SK-N-SH (cell line): ENCODE measurements at regions of chr5 and their contacts with region 1.

Region 1: GRCh38 chr5:93620487-93621326 is 37.7 kb downstream of the NR2F1 start:
- DNase-seq: peak; percentile 94
- H3K4me3 ChIP-seq: peak overlapping the region; percentile 71 to 85
- H3K27ac ChIP-seq: peak overlapping the region; percentile 86 to 97
- H3K4me1 ChIP-seq: peaks cover 0 to 4% of the 10 kb centered on the region in 2 experiments; a peak in 2 of 4 replicates
- H3K27me3 ChIP-seq: no peaks in the 10 kb centered on the region
- CTCF ChIP-seq: peak; percentile 22
- EP300 ChIP-seq: 0 out of 4 replicates have a peak, but pooled peaks of 1 of the 2 experiments have one; percentile 21
- RAD21 ChIP-seq: peak; percentile 60

Region 2: DNA sequence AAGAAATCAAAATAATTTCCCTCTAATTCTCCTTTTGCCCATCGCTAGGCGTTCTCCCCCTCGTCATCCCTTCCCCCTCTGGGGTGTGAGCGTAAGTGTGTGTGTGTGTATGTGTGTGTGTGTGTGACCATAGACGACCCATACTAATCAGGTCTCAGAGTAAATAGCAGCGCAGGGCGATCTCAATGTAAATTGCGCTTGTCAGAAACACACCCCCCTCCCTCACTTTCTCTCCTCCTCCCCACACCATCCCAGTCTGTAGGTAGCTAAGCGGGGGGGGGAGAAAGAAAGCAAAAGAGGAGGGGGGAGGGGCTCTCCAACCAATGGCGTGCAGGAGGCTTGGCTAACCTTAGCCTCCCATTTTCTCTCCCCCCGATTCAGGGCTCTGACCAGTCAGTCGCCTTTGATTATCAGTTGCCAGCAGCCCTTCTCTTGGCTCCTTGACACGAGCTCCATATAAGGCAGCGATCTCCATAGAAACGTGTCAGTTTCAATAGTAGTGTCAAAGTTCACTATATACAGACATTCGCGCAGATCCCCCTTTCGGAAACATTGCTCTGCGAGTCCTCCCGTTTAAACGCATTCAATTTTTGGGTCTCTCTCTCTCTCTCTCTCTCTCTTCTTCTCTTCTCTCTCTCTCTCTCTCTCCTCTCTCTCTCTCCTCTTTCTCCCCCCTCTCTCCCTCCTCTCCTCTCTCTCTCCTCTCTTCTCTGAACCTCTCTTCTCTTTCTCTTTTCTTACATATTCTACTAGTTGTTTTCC is 37.8 kb before region 1 on chr5 and contains the start of gene NR2F1:
- CTCF ChIA-PET with region 1: interaction called, 7 read pairs
- POLR2A ChIA-PET with region 1: interaction called, 18 read pairs
- DNase-seq: peak; percentile 80
- H3K4me3 ChIP-seq: peak within 1 kb of the TSS; percentile 74 to 87
- H3K27ac ChIP-seq: peak within 1 kb of the TSS; percentile 92
- H3K4me1 ChIP-seq: peaks cover 5 to 6% of the 10 kb centered on the region in 2 experiments; a peak in 3 of 4 replicates
- H3K27me3 ChIP-seq: no peaks in the 10 kb centered on the region
- CTCF ChIP-seq: peak; percentile 27; the same call in 1 of the 2 replicates
- EP300 ChIP-seq: peak; percentile 49 to 66; a peak in 3 of 4 replicates
- RAD21 ChIP-seq: no peak; the same call in 1 of the 2 replicates
- polyA plus RNA-seq, gene NR2F1: 40.0 and 47.1 TPM in 2 replicates

Region 3: GRCh38 chr5:93599399-93600120 is 21.1 kb before region 1 on chr5:
- CTCF ChIA-PET with region 1: interaction called, 3 read pairs
- POLR2A ChIA-PET with region 1: interaction called, 12 read pairs
- DNase-seq: peak; percentile 44
- H3K4me3 ChIP-seq: no peak overlapping the region; a peak in 1 of 4 replicates
- H3K27ac ChIP-seq: peak overlapping the region; percentile 61 to 94
- H3K4me1 ChIP-seq: peaks cover 6 to 20% of the 10 kb centered on the region in 2 experiments; a peak in 2 of 4 replicates
- H3K27me3 ChIP-seq: no peaks in the 10 kb centered on the region
- CTCF ChIP-seq: no peak
- EP300 ChIP-seq: no peak
- RAD21 ChIP-seq: no peak

Region 4: GRCh38 chr5:93675460-93676450 is 55.0 kb after region 1 on chr5:
- CTCF ChIA-PET with region 1: interaction called, 13 read pairs
- POLR2A ChIA-PET with region 1: interaction called, 5 read pairs
- DNase-seq: no peak
- H3K4me3 ChIP-seq: no peak overlapping the region
- H3K27ac ChIP-seq: peak overlapping the region in 1 of 2 experiments; percentile 60; a peak in 2 of 4 replicates
- H3K4me1 ChIP-seq: peaks cover 4 to 46% of the 10 kb centered on the region in 2 experiments; a peak in 3 of 4 replicates
- H3K27me3 ChIP-seq: no peaks in the 10 kb centered on the region
- CTCF ChIP-seq: no peak
- EP300 ChIP-seq: no peak; a peak in 1 of 4 replicates
- RAD21 ChIP-seq: no peak